ENCODE measurements at regions of chr16 and their contacts with region 1.

Region 1: DNA sequence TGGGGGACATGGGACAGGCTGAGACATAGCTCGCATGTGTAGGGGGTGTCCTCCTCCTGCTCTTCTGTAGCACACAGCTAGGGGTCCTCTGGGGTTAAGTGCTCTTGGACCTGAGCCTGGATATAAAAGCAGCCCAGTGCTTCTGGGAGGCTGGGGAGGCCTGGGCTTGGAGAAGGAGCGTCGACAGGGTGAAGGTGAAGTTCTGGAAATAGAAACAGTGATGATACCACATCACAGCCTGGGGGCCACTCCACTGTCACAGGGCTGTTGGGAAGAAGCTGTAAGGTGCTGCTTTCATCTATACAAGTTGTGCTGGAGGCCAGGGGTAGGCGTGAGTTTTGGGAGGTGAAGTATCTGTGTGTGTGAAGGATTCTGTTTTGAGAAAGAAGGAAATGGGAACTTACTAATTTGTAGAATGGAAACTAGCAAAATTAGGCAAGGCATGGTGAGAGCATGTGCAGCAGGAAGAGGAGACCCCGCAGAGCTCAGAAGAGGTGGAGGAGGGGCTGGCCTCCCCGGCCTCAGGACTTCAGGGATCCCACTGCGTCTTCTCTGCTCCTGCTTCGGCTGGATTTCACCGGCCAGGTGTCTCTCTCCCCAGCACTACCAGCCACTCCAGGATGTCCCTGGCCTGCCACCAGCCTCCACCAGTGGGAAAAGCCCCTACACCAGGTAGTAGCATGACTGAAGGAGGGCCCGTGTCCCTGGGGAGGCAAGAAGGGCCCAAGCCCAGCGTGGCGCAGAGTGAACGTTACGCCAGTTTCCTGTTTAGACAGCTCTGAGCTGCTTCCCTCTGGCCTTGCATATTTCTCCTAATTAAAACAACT is 19.4 kb downstream of the PLCG2 start:
- DNase-seq: peak; percentile 85
- H3K4me3 Mint-ChIP-seq: peak overlapping the region; percentile 55
- H3K27ac Mint-ChIP-seq: peak overlapping the region; percentile 90
- H3K4me1 Mint-ChIP-seq: peaks cover 25% of the 10 kb centered on the region
- H3K27me3 Mint-ChIP-seq: no peaks in the 10 kb centered on the region

Region 2: GRCh38 chr16:81745704-81746558 is 52.6 kb before region 1 on chr16:
- CTCF ChIA-PET with region 1: no interaction called
- intact Hi-C with region 1: loop called (anchors 2 kb)
- DNase-seq: peak; percentile 85
- H3K4me3 Mint-ChIP-seq: peak overlapping the region; percentile 78
- H3K27ac Mint-ChIP-seq: peak overlapping the region; percentile 82
- H3K4me1 Mint-ChIP-seq: peaks cover 14% of the 10 kb centered on the region
- H3K27me3 Mint-ChIP-seq: no peaks in the 10 kb centered on the region

Region 3: GRCh38 chr16:81778861-81779535 is 19.5 kb before region 1 on chr16 and contains the start of gene PLCG2:
- CTCF ChIA-PET with region 1: interaction called, 5 read pairs
- intact Hi-C with region 1: loop called (anchors 1 kb)
- DNase-seq: peak; percentile 64
- H3K4me3 Mint-ChIP-seq: peak within 1 kb of the TSS; percentile 76
- H3K27ac Mint-ChIP-seq: no peak within 1 kb of the TSS
- H3K4me1 Mint-ChIP-seq: peaks cover 10% of the 10 kb centered on the region
- H3K27me3 Mint-ChIP-seq: peaks cover 35% of the 10 kb centered on the region
- total RNA-seq, gene PLCG2: 12.0 to 13.4 TPM

Region 4: GRCh38 chr16:81841722-81842121 is 43.2 kb after region 1 on chr16:
- CTCF ChIA-PET with region 1: no interaction called
- intact Hi-C with region 1: loop called (anchors 2 kb)
- DNase-seq: peak; percentile 18
- H3K4me3 Mint-ChIP-seq: no peak overlapping the region
- H3K27ac Mint-ChIP-seq: no peak overlapping the region
- H3K4me1 Mint-ChIP-seq: no peaks in the 10 kb centered on the region
- H3K27me3 Mint-ChIP-seq: peaks cover 7% of the 10 kb centered on the region

Region 5: GRCh38 chr16:81973737-81974136 is 175.2 kb after region 1 on chr16:
- CTCF ChIA-PET with region 1: no interaction called
- intact Hi-C with region 1: no loop called
- DNase-seq: no peak
- H3K4me3 Mint-ChIP-seq: no peak overlapping the region
- H3K27ac Mint-ChIP-seq: no peak overlapping the region
- H3K4me1 Mint-ChIP-seq: no peaks in the 10 kb centered on the region
- H3K27me3 Mint-ChIP-seq: peaks cover 9% of the 10 kb centered on the region

Measured in activated naive CD4-positive, alpha-beta T cell treated with anti-CD3 and anti-CD28 coated beads for 36 hours (primary cell).